A673 (cell line): ENCODE measurements at regions of chr11 and their contacts with region 1.

Region 1: GRCh38 chr11:66421492-66422205 is 814 bp downstream of the NPAS4 start:
- DNase-seq: peak; percentile 94
- H3K4me3 ChIP-seq: no peak overlapping the region
- H3K27ac ChIP-seq: no peak overlapping the region
- H3K4me1 ChIP-seq: no peaks in the 10 kb centered on the region
- H3K27me3 ChIP-seq: peaks cover 24% of the 10 kb centered on the region
- CTCF ChIP-seq: no peak

Region 2: GRCh38 chr11:66559142-66559865 is 137.7 kb after region 1 on chr11:
- CTCF ChIA-PET with region 1: no interaction called
- POLR2A ChIA-PET with region 1: interaction called, 10 read pairs
- intact Hi-C with region 1: no loop called
- DNase-seq: no peak
- H3K4me3 ChIP-seq: no peak overlapping the region
- H3K27ac ChIP-seq: no peak overlapping the region
- H3K4me1 ChIP-seq: no peaks in the 10 kb centered on the region
- H3K27me3 ChIP-seq: peaks cover 21% of the 10 kb centered on the region
- CTCF ChIP-seq: no peak